ENCODE measurements at regions of chr17 and their contacts with region 1.

Region 1: DNA sequence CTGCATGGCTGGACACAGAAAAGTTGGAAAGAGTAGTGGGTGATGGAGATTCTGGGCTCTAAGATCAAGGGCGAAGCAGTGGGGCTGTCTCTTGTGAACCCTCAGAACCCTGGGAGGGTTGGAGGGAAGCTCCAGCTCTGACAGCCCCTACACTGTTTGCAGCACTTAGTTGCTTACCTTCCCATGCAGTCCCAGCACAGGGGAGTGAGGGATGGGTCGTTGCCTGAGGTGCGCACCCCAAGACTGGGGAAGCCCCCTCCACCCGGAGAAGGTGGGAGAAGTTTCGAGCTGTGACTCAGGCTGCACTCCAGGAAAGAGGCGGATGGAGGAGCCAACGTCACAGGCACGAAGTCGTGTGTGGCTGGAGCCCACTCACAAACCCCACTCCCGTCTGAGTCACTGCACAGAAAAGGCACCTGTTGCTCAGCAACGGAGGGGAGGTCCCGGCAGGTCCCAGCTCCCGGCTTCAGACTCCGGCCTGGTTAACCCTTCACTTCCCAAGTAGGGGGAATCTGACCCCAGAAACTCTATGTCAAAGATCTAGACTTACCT is 60.1 kb downstream of the AIPL1 start:
- DNase-seq: peak; percentile 89
- ATAC-seq: peak; percentile 89
- H3K4me3 Mint-ChIP-seq: peak overlapping the region; percentile 32
- H3K27ac Mint-ChIP-seq: peak overlapping the region; percentile 76
- H3K4me1 Mint-ChIP-seq: peaks cover 24% of the 10 kb centered on the region
- H3K27me3 Mint-ChIP-seq: peaks cover 31% of the 10 kb centered on the region

Region 2: DNA sequence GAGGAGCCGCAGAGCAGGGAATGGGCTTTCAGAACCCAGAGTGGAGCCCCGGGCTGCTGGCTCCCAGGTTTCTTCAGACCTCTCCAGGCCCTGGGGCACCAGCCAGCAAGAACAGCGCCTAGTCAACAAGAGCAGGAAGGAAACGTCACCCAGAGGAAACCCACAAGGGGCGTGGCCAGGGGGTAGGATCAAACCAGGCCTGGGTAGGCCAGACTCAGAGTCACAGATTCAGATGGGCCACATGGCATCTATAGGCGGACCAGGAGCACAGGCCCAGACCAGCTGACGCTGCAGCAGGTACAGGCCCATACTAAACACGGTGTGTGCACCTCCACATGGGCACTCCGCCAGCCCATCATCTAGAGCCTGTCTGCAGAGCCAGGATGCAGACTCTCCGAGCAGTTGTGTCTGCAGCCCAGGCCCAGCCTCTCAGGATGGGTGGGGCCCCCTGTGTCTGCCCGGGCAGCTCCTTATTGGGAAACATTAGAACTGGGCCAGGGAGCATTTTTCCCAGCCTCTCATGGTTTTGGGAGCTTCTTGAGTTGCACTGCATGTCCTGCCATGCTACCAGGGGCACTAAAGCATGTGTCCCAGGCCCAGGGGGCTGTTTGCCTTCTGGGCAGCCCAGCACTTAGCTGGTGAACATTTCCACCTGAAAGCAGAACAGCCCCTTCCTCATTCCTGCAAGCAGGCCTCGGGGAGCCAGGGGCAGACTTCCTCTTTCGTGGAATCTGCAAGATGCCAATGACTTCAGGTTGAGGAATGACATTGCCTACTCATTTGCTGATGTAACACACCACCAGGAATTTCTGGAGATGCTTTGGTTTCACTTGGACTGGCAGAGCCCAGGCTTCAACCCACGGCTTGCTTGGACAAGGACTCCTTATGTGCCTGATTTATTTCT is 790.2 kb before region 1 on chr17 and contains the start of gene NLRP1:
- CTCF ChIA-PET with region 1: no interaction called
- POLR2A ChIA-PET with region 1: no interaction called
- intact Hi-C with region 1: loop called in 1 of 2 experiments (anchors 2 kb)
- DNase-seq: peak; percentile 97
- ATAC-seq: peak; percentile 93
- H3K4me3 Mint-ChIP-seq: peak within 1 kb of the TSS; percentile 92
- H3K27ac Mint-ChIP-seq: peak within 1 kb of the TSS; percentile 94
- H3K4me1 Mint-ChIP-seq: peaks cover 62% of the 10 kb centered on the region
- H3K27me3 Mint-ChIP-seq: no peaks in the 10 kb centered on the region
- total RNA-seq, gene NLRP1: 31.2 to 34.0 TPM

Region 3: GRCh38 chr17:6215071-6216035 is 159.5 kb before region 1 on chr17:
- CTCF ChIA-PET with region 1: no interaction called
- POLR2A ChIA-PET with region 1: no interaction called
- intact Hi-C with region 1: loop called in 1 of 2 experiments (anchors 5 kb)
- DNase-seq: no peak
- ATAC-seq: no peak
- H3K4me3 Mint-ChIP-seq: no peak overlapping the region
- H3K27ac Mint-ChIP-seq: no peak overlapping the region
- H3K4me1 Mint-ChIP-seq: no peaks in the 10 kb centered on the region
- H3K27me3 Mint-ChIP-seq: peaks cover 33% of the 10 kb centered on the region

Region 4: GRCh38 chr17:6427279-6427781 is 52.5 kb after region 1 on chr17:
- CTCF ChIA-PET with region 1: no interaction called
- POLR2A ChIA-PET with region 1: no interaction called
- intact Hi-C with region 1: loop called (anchors 2 kb)
- DNase-seq: peak; percentile 77
- ATAC-seq: peak; percentile 80
- H3K4me3 Mint-ChIP-seq: peak overlapping the region; percentile 40
- H3K27ac Mint-ChIP-seq: peak overlapping the region; percentile 47
- H3K4me1 Mint-ChIP-seq: peaks cover 17% of the 10 kb centered on the region
- H3K27me3 Mint-ChIP-seq: peaks cover 13% of the 10 kb centered on the region

Region 5: DNA sequence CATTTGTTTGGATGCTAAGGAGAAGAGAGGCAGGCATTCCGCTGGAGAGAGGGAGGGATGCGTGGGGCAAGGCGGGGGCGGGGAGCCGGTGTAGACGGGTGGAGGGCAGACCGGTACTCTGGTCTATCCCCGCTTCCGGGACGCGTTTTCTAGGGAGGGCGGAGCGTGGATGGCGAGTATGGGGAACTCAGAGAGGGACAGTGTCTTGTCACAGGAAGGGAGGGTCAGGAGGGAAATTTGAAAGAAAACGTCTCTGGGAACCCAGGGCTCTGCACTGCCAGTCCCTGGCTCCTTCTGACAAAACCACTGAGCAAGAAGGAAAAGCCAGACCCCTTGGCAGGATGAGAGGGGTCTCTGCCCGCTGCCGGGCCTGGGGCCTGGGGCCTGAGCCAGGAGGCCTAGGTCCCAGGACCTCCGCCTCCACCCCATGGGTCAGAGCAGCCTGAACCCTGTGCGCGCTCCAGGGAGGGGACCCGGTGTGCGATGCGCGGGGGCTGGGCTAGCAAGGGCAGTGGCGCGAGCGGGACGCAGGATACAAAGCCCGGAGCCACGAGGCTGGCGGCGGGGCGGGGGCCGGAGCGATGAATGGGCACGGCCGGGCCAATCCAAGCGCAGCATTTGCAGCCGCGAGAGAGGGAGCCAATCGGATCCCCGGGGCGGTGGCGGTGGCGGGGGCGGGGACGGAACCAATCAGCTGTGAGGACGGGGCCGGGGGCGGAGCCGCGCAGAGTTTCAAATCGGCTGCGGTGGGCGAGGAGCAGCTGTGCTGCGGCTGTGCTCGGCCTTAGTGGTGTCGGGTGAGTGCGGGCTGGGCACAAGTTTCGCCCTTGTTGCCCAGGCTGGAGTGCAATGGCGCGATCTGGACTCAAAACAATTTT is 69.1 kb after region 1 on chr17 and contains the start of gene PIMREG:
- CTCF ChIA-PET with region 1: no interaction called
- POLR2A ChIA-PET with region 1: no interaction called
- intact Hi-C with region 1: loop called in 1 of 2 experiments (anchors 2 kb)
- DNase-seq: peak; percentile 97
- ATAC-seq: peak; percentile 98
- H3K4me3 Mint-ChIP-seq: peak within 1 kb of the TSS; percentile 77
- H3K27ac Mint-ChIP-seq: peak within 1 kb of the TSS; percentile 90
- H3K4me1 Mint-ChIP-seq: peaks cover 12% of the 10 kb centered on the region
- H3K27me3 Mint-ChIP-seq: peaks cover 7% of the 10 kb centered on the region
- total RNA-seq, gene PIMREG: 8.4 to 10.0 TPM

Region 6: DNA sequence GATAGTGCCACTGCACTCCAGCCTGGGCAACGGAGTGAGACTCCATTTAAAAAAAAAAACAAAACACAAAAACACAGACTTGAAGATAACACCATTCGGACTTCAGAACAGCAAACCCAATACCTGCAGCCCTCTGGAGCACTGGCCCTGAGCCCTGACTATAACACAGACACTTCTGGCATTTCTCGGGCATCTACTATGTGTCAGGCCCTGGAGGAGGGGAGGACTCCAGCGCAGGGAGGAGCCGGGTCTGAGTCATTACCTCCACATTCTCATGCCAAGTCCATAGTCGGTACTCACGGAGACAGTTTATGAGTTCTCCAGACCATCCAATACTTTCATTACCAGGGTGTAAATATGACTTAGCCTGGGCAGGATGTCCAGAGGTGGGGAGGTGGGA is 132.7 kb after region 1 on chr17:
- CTCF ChIA-PET with region 1: no interaction called
- POLR2A ChIA-PET with region 1: no interaction called
- intact Hi-C with region 1: no loop called
- DNase-seq: no peak
- ATAC-seq: no peak
- H3K4me3 Mint-ChIP-seq: no peak overlapping the region
- H3K27ac Mint-ChIP-seq: no peak overlapping the region
- H3K4me1 Mint-ChIP-seq: no peaks in the 10 kb centered on the region
- H3K27me3 Mint-ChIP-seq: no peaks in the 10 kb centered on the region

Region 7: GRCh38 chr17:7060165-7060891 is 685.5 kb after region 1 on chr17:
- CTCF ChIA-PET with region 1: no interaction called
- POLR2A ChIA-PET with region 1: no interaction called
- intact Hi-C with region 1: loop called in 1 of 2 experiments (anchors 2 kb)
- DNase-seq: peak; percentile 78
- ATAC-seq: peak; percentile 87
- H3K4me3 Mint-ChIP-seq: peak overlapping the region; percentile 49
- H3K27ac Mint-ChIP-seq: peak overlapping the region; percentile 88
- H3K4me1 Mint-ChIP-seq: peaks cover 26% of the 10 kb centered on the region
- H3K27me3 Mint-ChIP-seq: no peaks in the 10 kb centered on the region